ENCODE measurements at regions of chr17 and their contacts with region 1.

Region 1: DNA sequence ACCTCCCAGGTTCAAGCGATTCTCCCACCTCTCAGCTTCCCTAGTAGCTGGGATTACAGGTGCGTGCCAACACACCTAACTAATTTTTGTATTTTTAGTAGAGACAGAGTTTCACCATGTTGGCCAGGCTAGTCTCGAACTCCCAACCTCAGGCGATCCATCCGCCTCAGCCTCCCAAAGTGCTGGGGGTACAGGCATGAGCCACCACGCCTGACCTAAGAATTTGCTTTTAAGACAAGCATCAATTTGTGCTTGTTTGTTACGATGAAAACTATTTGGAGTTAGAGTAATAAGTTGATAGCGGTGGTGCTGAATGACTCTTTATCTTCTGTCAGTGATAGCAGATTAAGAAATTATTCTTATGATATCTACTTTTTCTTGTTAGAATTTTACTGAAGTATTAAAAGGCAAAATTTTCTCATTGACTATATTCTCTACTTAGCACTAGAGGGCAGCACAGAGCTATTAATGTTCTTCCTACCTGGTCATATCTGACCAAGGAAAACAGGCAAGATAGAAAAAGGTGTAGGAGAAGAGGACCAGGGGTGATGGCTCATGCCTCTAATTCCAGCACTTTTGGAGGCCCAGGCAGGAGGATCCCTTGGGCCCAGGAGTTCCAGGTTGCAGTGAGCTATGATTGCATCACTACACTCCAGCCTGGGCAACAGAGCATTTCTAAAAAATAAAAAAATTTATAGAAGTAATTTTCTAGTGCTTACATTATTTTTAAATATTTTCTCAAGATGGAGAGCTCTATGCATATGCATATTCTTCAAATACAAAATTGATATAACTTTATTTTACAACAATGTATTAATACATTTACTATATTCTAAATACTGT is 24.5 kb downstream of the STXBP4 start:
- DNase-seq: no peak
- ATAC-seq: peak; percentile 67 to 93 (median 85)
- H3K4me3 ChIP-seq: no peak overlapping the region
- H3K27ac ChIP-seq: no peak overlapping the region
- H3K4me1 ChIP-seq: no peaks in the 10 kb centered on the region
- H3K27me3 ChIP-seq: no peaks in the 10 kb centered on the region
- CTCF ChIP-seq: peak; percentile 37 to 46 (median 40)

Region 2: GRCh38 chr17:55348749-55349354 is 355.8 kb after region 1 on chr17:
- intact Hi-C with region 1: loop called in 2 of 3 experiments (anchors 5 to 10 kb)
- DNase-seq: peak in 5 of 6 donors; percentile 6 to 64 (median 34)
- ATAC-seq: peak; percentile 72 to 92 (median 88)
- H3K4me3 ChIP-seq: no peak overlapping the region
- H3K27ac ChIP-seq: no peak overlapping the region
- H3K4me1 ChIP-seq: no peaks in the 10 kb centered on the region
- H3K27me3 ChIP-seq: no peaks in the 10 kb centered on the region
- CTCF ChIP-seq: peak; percentile 43 to 67 (median 60)

Region 3: DNA sequence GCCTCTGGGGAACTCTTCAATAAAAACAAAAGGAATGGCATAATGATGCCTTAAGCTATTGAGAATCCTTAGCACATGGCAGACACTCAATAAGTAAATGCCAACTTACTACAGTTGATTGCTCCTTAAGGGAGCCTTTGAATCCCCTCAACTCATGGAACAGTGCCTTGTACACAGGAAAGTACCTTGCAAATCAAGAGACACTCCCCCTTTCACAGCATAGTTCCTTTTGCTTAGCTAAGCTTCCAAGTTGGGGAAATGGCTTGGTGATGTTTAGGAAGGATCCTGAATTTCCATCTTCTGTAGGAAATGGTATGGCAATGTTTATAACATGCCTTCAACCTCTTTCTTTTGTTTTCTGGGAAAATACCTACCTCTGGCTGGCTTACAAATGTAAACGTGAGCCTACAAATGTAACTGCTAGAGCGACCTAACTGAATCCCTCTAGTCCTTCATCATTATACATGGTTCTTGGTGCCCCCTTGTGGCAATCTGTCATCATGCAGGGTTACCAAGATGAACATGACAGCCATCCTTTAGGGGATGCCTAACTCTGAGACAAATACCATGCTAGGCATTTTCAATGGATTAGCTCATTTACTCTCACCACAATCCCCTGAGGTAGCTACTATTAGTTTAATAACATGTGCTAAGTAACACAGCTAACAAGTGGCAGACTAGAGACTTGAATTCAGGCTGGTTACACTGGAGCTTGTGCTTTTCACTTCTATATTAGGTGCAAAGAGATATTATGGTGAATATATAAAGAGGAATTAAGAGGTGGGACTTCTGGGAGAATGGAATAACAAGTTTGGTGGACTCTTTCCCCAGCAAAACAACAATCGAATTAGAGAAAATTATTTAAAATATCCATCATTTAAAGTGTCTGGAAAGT is 363.7 kb after region 1 on chr17:
- intact Hi-C with region 1: loop called in 1 of 3 experiments (anchors 10 kb)
- DNase-seq: peak in 5 of 6 donors; percentile 25 to 62 (median 48)
- ATAC-seq: peak; percentile 46 to 89 (median 86)
- H3K4me3 ChIP-seq: no peak overlapping the region
- H3K27ac ChIP-seq: no peak overlapping the region
- H3K4me1 ChIP-seq: no peaks in the 10 kb centered on the region
- H3K27me3 ChIP-seq: no peaks in the 10 kb centered on the region
- CTCF ChIP-seq: peak; percentile 56 to 70 (median 70)